ENCODE measurements at regions of chr22 and their contacts with region 1.

Region 1: DNA sequence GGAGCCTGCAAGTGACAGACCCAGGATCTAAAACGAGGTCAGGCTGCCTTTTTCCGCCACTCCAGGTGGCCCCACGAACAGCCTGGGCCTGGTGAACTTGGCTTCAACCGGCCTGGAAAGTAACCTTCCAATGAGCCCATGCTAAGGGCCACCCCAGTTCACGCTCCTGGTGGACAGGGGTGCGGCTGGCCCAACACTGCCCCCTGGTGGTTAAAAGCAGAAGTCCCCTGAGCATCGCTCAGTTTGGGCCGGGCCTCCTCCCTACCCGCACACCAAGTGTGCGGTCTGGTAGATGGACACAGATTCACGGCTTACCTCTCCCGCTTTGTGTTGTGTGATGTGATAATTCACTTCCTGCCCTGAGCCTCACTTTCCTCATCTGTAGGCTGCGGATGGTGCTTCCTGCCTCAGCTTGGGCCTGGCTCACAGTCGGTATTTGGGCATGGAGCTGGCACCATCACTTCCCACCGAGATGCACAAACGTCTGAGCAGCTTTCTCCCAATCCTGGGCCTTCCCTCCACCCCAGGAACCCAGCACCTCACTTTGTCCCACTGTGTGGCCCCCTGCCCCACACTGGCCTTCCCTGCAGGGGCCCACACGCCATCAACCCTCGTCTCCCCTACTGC is 13.7 kb upstream of the SEC14L3 start:
- DNase-seq: peak; percentile 33
- ATAC-seq: peak; percentile 100
- H3K4me3 ChIP-seq: no peak overlapping the region
- H3K27ac ChIP-seq: no peak overlapping the region
- H3K4me1 ChIP-seq: no peaks in the 10 kb centered on the region
- H3K27me3 ChIP-seq: peaks cover 26% of the 10 kb centered on the region
- CTCF ChIP-seq: peak; percentile 90
- POLR2A ChIP-seq: no peak
- RAD21 ChIP-seq: peak; percentile 89

Region 2: DNA sequence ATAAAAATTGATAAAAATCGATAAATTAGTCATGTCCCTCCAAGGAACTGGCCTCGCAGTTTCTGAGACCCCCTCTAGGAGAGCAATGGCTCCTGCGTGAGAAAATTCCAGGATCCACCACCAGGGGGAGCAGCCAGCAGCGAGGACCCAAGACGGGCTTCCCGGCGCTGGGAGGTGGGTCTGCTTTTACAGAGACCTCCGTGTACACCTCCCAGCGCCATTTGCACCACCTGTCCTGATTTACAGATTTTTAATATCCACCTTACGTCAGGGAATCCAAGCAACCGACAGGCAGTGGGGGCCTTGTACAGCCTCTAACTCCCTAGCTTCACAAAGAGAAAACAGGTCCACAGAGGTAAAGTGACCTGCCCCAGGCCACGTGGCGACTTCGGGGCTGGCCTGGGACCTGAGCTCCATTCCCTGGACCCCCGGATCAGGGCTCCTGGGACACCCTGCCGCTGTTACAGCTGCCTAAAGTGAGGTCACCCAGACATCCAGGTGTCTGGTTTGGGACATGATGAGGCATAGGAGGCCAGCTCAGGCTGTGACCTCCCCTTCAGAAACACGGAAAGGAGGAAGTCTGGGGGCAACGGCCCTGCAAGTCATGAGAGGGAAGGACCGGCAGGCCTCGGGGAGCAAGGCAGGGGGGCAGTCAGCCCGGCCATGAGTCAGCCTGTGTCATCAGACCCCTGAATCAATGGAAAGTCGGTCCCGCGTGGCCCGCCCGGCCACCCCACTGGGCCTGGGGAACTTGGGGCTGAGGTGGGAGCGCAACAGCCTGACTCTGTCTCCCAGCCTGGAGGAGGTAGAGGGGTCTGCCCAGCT is 222.3 kb before region 1 on chr22:
- CTCF ChIA-PET with region 1: no interaction called
- POLR2A ChIA-PET with region 1: no interaction called
- dilution Hi-C with region 1: no loop called
- in situ Hi-C with region 1: no loop called
- intact Hi-C with region 1: loop called (anchors 2 kb)
- DNase-seq: peak; percentile 61
- ATAC-seq: peak; percentile 87
- H3K4me3 ChIP-seq: peak overlapping the region; percentile 26; the same call in 1 of the 2 replicates
- H3K27ac ChIP-seq: no peak overlapping the region
- H3K4me1 ChIP-seq: peaks cover 6% of the 10 kb centered on the region; the same call in 1 of the 2 replicates
- H3K27me3 ChIP-seq: no peaks in the 10 kb centered on the region; the same call in 1 of the 2 replicates
- CTCF ChIP-seq: peak; percentile 91
- POLR2A ChIP-seq: no peak
- RAD21 ChIP-seq: peak; percentile 72

Region 3: GRCh38 chr22:30444632-30445437 is 40.6 kb before region 1 on chr22:
- CTCF ChIA-PET with region 1: interaction called, 3 read pairs
- POLR2A ChIA-PET with region 1: no interaction called
- dilution Hi-C with region 1: no loop called
- in situ Hi-C with region 1: no loop called
- intact Hi-C with region 1: loop called (anchors 1 kb)
- DNase-seq: peak; percentile 52
- ATAC-seq: peak; percentile 94
- H3K4me3 ChIP-seq: no peak overlapping the region
- H3K27ac ChIP-seq: no peak overlapping the region
- H3K4me1 ChIP-seq: peaks cover 5% of the 10 kb centered on the region; the same call in 1 of the 2 replicates
- H3K27me3 ChIP-seq: peaks cover 8% of the 10 kb centered on the region
- CTCF ChIP-seq: peak; percentile 76
- POLR2A ChIP-seq: peak; percentile 48; the same call in 1 of the 2 replicates
- RAD21 ChIP-seq: peak; percentile 76

Region 4: GRCh38 chr22:30876915-30877553 is 391.6 kb after region 1 on chr22:
- CTCF ChIA-PET with region 1: no interaction called
- POLR2A ChIA-PET with region 1: no interaction called
- dilution Hi-C with region 1: no loop called
- in situ Hi-C with region 1: no loop called
- intact Hi-C with region 1: no loop called
- DNase-seq: peak; percentile 52
- ATAC-seq: peak; percentile 62
- H3K4me3 ChIP-seq: no peak overlapping the region
- H3K27ac ChIP-seq: no peak overlapping the region
- H3K4me1 ChIP-seq: no peaks in the 10 kb centered on the region; the same call in 1 of the 2 replicates
- H3K27me3 ChIP-seq: no peaks in the 10 kb centered on the region; the same call in 1 of the 2 replicates
- CTCF ChIP-seq: no peak
- POLR2A ChIP-seq: no peak
- RAD21 ChIP-seq: no peak

Measured in IMR-90 (cell line).